Mammary epithelial cell (primary cell): ENCODE measurements at regions of chr1 and their contacts with region 1.

Region 1: GRCh38 chr1:204941421-204942338 is 71.0 kb downstream of the NFASC start:
- DNase-seq: peak; percentile 37
- H3K4me3 ChIP-seq: no peak overlapping the region
- H3K27ac ChIP-seq: no peak overlapping the region
- H3K4me1 ChIP-seq: peaks cover 14% of the 10 kb centered on the region
- H3K27me3 ChIP-seq: no peaks in the 10 kb centered on the region
- CTCF ChIP-seq: peak; percentile 98

Region 2: GRCh38 chr1:204819495-204819894 is 122.2 kb before region 1 on chr1:
- CTCF ChIA-PET with region 1: no interaction called
- dilution Hi-C with region 1: no loop called
- in situ Hi-C with region 1: loop called in 1 of 2 experiments (anchors 5 kb)
- intact Hi-C with region 1: no loop called
- DNase-seq: peak; percentile 60
- H3K4me3 ChIP-seq: no peak overlapping the region
- H3K27ac ChIP-seq: no peak overlapping the region
- H3K4me1 ChIP-seq: peaks cover 6% of the 10 kb centered on the region
- H3K27me3 ChIP-seq: no peaks in the 10 kb centered on the region
- CTCF ChIP-seq: no peak

Region 3: GRCh38 chr1:204828338-204828850 is 113.3 kb before region 1 on chr1:
- CTCF ChIA-PET with region 1: no interaction called
- dilution Hi-C with region 1: no loop called
- in situ Hi-C with region 1: no loop called
- intact Hi-C with region 1: loop called (anchors 1 kb)
- DNase-seq: peak; percentile 72
- H3K4me3 ChIP-seq: peak overlapping the region; percentile 23 to 62 (median 42)
- H3K27ac ChIP-seq: no peak overlapping the region
- H3K4me1 ChIP-seq: peaks cover 3% of the 10 kb centered on the region
- H3K27me3 ChIP-seq: peaks cover 2% of the 10 kb centered on the region
- CTCF ChIP-seq: peak in 1 of 2 donors; percentile 8

Region 4: DNA sequence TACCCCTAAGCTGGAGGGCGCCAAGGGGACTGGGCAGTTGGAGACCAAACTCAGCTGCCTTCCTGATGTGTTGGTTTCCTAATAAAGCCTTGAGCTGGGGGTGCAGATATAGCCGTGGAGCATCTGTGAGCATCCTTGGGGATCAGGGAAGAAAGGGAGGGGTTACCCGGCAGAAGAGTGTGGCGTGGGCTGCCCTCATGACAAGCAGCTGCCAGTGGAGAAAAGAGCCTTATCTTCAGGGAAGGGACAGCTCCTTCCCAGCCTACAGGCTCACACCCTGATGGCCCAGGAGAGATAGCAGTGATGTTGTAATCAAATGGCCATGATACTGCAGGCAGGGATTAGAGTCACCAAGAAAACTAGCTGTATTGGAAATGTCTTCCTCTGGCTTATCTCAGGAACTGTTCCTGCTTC is 81.8 kb before region 1 on chr1:
- CTCF ChIA-PET with region 1: no interaction called
- dilution Hi-C with region 1: loop called (anchors 5 kb)
- in situ Hi-C with region 1: no loop called
- intact Hi-C with region 1: no loop called
- DNase-seq: no peak
- H3K4me3 ChIP-seq: no peak overlapping the region
- H3K27ac ChIP-seq: no peak overlapping the region
- H3K4me1 ChIP-seq: no peaks in the 10 kb centered on the region
- H3K27me3 ChIP-seq: peaks cover 3% of the 10 kb centered on the region
- CTCF ChIP-seq: no peak

Region 5: GRCh38 chr1:204885288-204885711 is 56.4 kb before region 1 on chr1:
- CTCF ChIA-PET with region 1: no interaction called
- dilution Hi-C with region 1: no loop called
- in situ Hi-C with region 1: no loop called
- intact Hi-C with region 1: loop called (anchors 1 kb)
- DNase-seq: peak; percentile 72
- H3K4me3 ChIP-seq: peak overlapping the region; percentile 14 to 34 (median 28)
- H3K27ac ChIP-seq: peak overlapping the region; percentile 50
- H3K4me1 ChIP-seq: peaks cover 14% of the 10 kb centered on the region
- H3K27me3 ChIP-seq: no peaks in the 10 kb centered on the region
- CTCF ChIP-seq: no peak

Region 6: GRCh38 chr1:204971517-204972336 is 30.0 kb after region 1 on chr1:
- CTCF ChIA-PET with region 1: no interaction called
- dilution Hi-C with region 1: no loop called
- in situ Hi-C with region 1: no loop called
- intact Hi-C with region 1: no loop called
- DNase-seq: peak; percentile 59
- H3K4me3 ChIP-seq: no peak overlapping the region
- H3K27ac ChIP-seq: no peak overlapping the region
- H3K4me1 ChIP-seq: peaks cover 6% of the 10 kb centered on the region
- H3K27me3 ChIP-seq: no peaks in the 10 kb centered on the region
- CTCF ChIP-seq: no peak

Region 7: DNA sequence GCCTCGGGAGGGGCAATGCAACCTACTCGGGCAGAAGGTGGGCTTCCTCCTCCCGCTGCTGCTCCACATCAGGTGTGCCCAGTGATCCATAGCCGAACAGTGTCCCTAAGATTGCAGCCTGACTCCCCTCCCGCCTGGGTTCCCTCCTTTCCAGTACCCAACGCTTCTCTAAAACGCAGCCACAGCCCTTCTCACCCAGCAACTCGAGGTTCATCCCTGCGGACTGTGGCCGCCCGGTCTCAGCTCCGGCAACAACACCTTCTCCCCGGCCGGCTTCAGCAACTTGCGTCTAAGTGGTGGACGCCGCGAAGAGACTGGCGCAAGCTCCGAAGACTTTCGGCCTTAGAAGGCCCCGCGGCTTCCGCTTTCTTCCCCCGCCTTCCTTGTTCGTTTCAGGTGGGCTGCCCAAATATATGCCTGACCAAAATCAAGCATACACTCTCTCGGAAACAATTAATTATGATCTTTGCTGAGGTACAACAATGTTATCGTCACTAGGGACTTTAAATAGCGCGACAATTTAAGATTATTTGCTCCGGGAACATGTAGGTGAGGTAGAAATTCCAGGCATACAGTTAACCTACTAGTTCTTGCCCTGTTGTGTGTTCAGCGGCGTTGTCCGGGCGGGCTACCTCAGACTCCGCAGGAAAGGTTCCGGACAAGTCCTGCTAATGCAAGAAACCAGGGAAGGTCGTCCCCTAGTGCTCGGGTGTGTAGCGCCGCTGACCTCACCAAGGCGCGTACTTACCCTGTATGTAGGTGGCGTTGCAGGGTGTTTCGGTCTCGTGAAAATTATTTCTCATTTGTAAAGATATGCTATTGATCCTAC is 180.2 kb after region 1 on chr1 and contains the start of gene RBBP5:
- CTCF ChIA-PET with region 1: no interaction called
- dilution Hi-C with region 1: no loop called
- in situ Hi-C with region 1: no loop called
- intact Hi-C with region 1: no loop called
- DNase-seq: peak; percentile 93
- H3K4me3 ChIP-seq: peak within 1 kb of the TSS; percentile 68 to 96 (median 85)
- H3K27ac ChIP-seq: peak within 1 kb of the TSS; percentile 99
- H3K4me1 ChIP-seq: peaks cover 12% of the 10 kb centered on the region
- H3K27me3 ChIP-seq: no peaks in the 10 kb centered on the region
- CTCF ChIP-seq: peak; percentile 67 to 85
- total RNA-seq, gene RBBP5: 15.2 to 17.5 TPM